ENCODE measurements at regions of chr11 and their contacts with region 1.

Region 1: DNA sequence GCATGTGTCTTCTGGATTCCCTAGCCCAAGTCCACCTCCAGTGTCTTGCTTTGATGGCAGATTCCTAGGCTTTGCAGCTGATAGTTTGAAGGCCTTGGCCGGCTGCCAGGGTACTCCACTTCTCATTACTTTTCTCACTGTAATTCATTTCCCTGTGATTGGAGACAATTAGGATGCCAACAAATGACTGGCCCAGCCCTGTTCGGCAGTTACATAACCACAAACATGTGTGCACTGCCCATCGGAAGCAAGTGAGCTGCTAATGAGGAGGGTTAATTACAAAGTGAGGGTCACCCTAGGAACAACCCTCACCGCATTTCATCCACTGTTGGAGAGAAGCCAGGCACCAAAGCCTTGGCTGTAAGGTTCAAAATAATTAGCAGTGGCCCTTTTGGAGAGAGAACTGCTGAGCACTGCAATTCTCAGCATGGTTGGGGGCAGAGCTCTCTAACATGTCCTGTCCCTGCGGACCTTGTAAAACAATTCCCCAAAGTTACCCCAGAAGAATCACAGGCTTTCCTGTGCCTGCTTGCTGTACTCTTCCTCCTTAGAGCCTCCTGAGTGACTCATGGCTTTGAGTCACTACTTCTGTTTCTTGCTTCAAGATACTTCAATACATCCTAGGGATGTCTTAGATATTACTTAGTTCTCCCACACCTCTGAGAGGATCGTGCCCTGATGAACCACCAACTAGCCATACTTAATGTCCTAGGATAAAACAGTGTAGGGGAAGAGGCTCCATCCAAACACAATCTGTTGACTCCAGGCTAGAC is 109.7 kb upstream of the GALNT18 start:
- DNase-seq: peak; percentile 85
- H3K4me3 Mint-ChIP-seq: no peak overlapping the region
- H3K27ac Mint-ChIP-seq: peak overlapping the region; percentile 72
- H3K4me1 Mint-ChIP-seq: peaks cover 17% of the 10 kb centered on the region
- H3K27me3 Mint-ChIP-seq: no peaks in the 10 kb centered on the region
- CTCF ChIP-seq: no peak

Region 2: DNA sequence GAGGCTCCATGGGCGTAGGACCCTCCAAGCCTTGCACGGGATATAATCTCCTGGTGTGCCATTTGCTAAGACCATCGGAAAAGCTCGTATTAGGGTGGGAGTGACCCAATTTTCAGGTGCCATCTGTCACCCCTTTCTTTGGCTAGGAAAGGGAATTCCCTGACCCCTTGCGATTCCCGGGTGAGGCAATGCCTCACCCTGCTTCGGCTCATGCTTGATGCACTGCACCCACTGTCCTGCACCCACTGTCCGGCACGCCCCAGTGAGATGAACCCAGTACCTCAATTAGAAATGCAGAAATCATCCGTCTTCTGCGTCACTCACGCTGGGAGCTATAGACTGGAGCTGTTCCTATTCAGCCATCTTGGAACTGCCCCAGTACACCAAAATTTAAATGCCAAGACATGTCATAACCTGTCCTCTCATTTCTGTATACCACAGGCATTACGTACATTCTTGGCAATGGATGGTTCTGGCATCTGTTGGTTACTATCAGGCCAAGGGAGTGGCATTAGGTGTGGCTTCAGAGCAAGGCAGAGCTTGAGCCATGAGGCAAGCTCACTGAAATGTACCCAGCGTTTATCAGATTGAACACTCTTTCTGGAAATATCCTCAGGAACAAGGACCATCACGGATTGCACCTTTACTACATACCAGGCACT is 14.3 kb before region 1 on chr11:
- CTCF ChIA-PET with region 1: interaction called, 13 read pairs
- POLR2A ChIA-PET with region 1: interaction called, 25 read pairs
- intact Hi-C with region 1: no loop called
- DNase-seq: peak; percentile 97
- H3K4me3 Mint-ChIP-seq: peak overlapping the region; percentile 63
- H3K27ac Mint-ChIP-seq: peak overlapping the region; percentile 89
- H3K4me1 Mint-ChIP-seq: peaks cover 12% of the 10 kb centered on the region
- H3K27me3 Mint-ChIP-seq: no peaks in the 10 kb centered on the region
- CTCF ChIP-seq: no peak